CD8-positive, alpha-beta T cell (primary cell): ENCODE measurements at regions of chr12 and their contacts with region 1.

Region 1: DNA sequence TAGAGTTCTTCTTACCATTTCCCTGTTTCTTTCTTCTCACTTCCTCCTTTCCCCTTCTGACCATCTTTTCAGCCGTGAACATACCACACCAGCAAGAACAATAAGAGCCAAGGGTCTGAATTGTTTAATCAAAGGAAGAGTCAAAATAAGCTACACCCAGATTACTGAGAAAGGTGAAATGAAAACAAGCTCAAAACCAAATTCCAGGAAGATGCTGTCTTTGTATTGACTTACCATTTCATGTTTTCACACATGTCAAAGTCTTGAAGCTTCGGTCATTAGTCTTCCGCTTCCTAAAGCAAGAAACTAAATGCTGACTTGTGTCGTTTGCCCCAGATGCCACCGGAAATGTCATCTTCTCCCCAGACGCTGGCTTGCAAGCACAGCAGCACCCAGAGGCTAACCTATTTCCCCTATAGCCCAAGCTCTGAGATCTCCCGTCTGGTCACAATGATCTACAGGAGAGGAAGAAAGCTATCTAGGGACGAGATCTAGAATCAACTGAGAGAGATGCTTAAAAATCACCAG is 136.5 kb upstream of the AMIGO2 start:
- DNase-seq: peak; percentile 28 to 92 (median 73)
- ATAC-seq: peak; percentile 46
- H3K4me3 ChIP-seq: peak overlapping the region; percentile 75 to 80
- H3K4me3 Mint-ChIP-seq: peak overlapping the region; percentile 95
- H3K27ac ChIP-seq: peak overlapping the region; percentile 74 to 81
- H3K27ac Mint-ChIP-seq: peak overlapping the region; percentile 96
- H3K4me1 ChIP-seq: peaks cover 5% of the 10 kb centered on the region
- H3K4me1 Mint-ChIP-seq: peaks cover 30% of the 10 kb centered on the region
- H3K27me3 ChIP-seq: no peaks in the 10 kb centered on the region
- H3K27me3 Mint-ChIP-seq: no peaks in the 10 kb centered on the region
- CTCF ChIP-seq: no peak

Region 2: GRCh38 chr12:45728630-45729232 is 1487.5 kb before region 1 on chr12:
- CTCF ChIA-PET with region 1: no interaction called
- POLR2A ChIA-PET with region 1: interaction called, 3 read pairs
- intact Hi-C with region 1: loop called in 1 of 2 experiments (anchors 5 kb)
- DNase-seq: peak; percentile 93 to 98 (median 97)
- ATAC-seq: peak; percentile 76
- H3K4me3 ChIP-seq: peak overlapping the region; percentile 85 to 90
- H3K4me3 Mint-ChIP-seq: peak overlapping the region; percentile 96
- H3K27ac ChIP-seq: peak overlapping the region; percentile 90 to 96
- H3K27ac Mint-ChIP-seq: peak overlapping the region; percentile 97
- H3K4me1 ChIP-seq: peaks cover 20% of the 10 kb centered on the region
- H3K4me1 Mint-ChIP-seq: peaks cover 26% of the 10 kb centered on the region
- H3K27me3 ChIP-seq: no peaks in the 10 kb centered on the region
- H3K27me3 Mint-ChIP-seq: no peaks in the 10 kb centered on the region
- CTCF ChIP-seq: peak; percentile 90

Region 3: GRCh38 chr12:46839964-46840363 is 376.2 kb before region 1 on chr12:
- CTCF ChIA-PET with region 1: no interaction called
- POLR2A ChIA-PET with region 1: no interaction called
- intact Hi-C with region 1: no loop called
- DNase-seq: no peak
- ATAC-seq: no peak
- H3K4me3 ChIP-seq: no peak overlapping the region
- H3K4me3 Mint-ChIP-seq: no peak overlapping the region
- H3K27ac ChIP-seq: no peak overlapping the region
- H3K27ac Mint-ChIP-seq: no peak overlapping the region
- H3K4me1 ChIP-seq: no peaks in the 10 kb centered on the region
- H3K4me1 Mint-ChIP-seq: no peaks in the 10 kb centered on the region
- H3K27me3 ChIP-seq: no peaks in the 10 kb centered on the region
- H3K27me3 Mint-ChIP-seq: peaks cover 22% of the 10 kb centered on the region
- CTCF ChIP-seq: no peak

Region 4: GRCh38 chr12:47079468-47079980 is 136.7 kb before region 1 on chr12 and contains the starts of genes AMIGO2 and PCED1B:
- CTCF ChIA-PET with region 1: interaction called, 5 read pairs
- POLR2A ChIA-PET with region 1: interaction called, 55 read pairs
- intact Hi-C with region 1: loop called (anchors 2 to 5 kb)
- DNase-seq: peak; percentile 13 to 81 (median 69)
- ATAC-seq: peak; percentile 54
- H3K4me3 ChIP-seq: peak within 1 kb of the TSS; percentile 85 to 92
- H3K4me3 Mint-ChIP-seq: peak within 1 kb of the TSS; percentile 98
- H3K27ac ChIP-seq: peak within 1 kb of the TSS; percentile 63 to 85
- H3K27ac Mint-ChIP-seq: peak within 1 kb of the TSS; percentile 96
- H3K4me1 ChIP-seq: peaks cover 55% of the 10 kb centered on the region
- H3K4me1 Mint-ChIP-seq: peaks cover 76% of the 10 kb centered on the region
- H3K27me3 ChIP-seq: no peaks in the 10 kb centered on the region
- H3K27me3 Mint-ChIP-seq: no peaks in the 10 kb centered on the region
- CTCF ChIP-seq: no peak
- total RNA-seq, gene AMIGO2: 12.5 to 13.5 TPM
- total RNA-seq, gene PCED1B: 32.9 to 33.7 TPM

Region 5: GRCh38 chr12:47276621-47277309 is 60.6 kb after region 1 on chr12:
- CTCF ChIA-PET with region 1: interaction called, 5 read pairs
- POLR2A ChIA-PET with region 1: interaction called, 28 read pairs
- intact Hi-C with region 1: loop called in 1 of 2 experiments (anchors 1 kb)
- DNase-seq: peak; percentile 35 to 91 (median 62)
- ATAC-seq: peak; percentile 94
- H3K4me3 ChIP-seq: peak overlapping the region in 1 of 2 experiments; percentile 25
- H3K4me3 Mint-ChIP-seq: peak overlapping the region; percentile 67
- H3K27ac ChIP-seq: peak overlapping the region; percentile 64 to 91
- H3K27ac Mint-ChIP-seq: peak overlapping the region; percentile 97
- H3K4me1 ChIP-seq: peaks cover 67% of the 10 kb centered on the region
- H3K4me1 Mint-ChIP-seq: peaks cover 80% of the 10 kb centered on the region
- H3K27me3 ChIP-seq: no peaks in the 10 kb centered on the region
- H3K27me3 Mint-ChIP-seq: no peaks in the 10 kb centered on the region
- CTCF ChIP-seq: no peak

Region 6: GRCh38 chr12:47293406-47293805 is 77.2 kb after region 1 on chr12:
- CTCF ChIA-PET with region 1: no interaction called
- POLR2A ChIA-PET with region 1: no interaction called
- intact Hi-C with region 1: no loop called
- DNase-seq: no peak
- ATAC-seq: no peak
- H3K4me3 ChIP-seq: no peak overlapping the region
- H3K4me3 Mint-ChIP-seq: no peak overlapping the region
- H3K27ac ChIP-seq: no peak overlapping the region
- H3K27ac Mint-ChIP-seq: no peak overlapping the region
- H3K4me1 ChIP-seq: peaks cover 16% of the 10 kb centered on the region
- H3K4me1 Mint-ChIP-seq: peaks cover 28% of the 10 kb centered on the region
- H3K27me3 ChIP-seq: no peaks in the 10 kb centered on the region
- H3K27me3 Mint-ChIP-seq: no peaks in the 10 kb centered on the region
- CTCF ChIP-seq: no peak

Region 7: DNA sequence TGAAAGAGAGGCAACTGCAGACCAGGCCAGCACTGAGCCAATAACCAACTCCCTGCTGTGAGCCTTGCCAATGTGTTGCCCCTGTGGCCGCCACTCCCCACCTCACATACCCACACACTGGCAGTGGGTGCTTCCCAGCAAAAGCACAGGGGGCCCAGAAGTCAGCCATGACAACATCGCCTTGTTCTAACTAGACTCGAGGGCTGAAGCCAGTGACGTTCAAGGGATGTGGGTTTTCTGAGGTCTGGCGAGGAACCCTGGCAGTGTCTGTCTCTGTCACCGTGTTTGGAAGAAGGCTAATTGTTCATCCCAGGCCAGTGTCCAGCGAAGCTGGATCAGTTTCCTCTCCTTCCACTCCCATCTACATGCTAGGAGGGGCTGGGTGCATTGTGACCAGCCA is 175.4 kb after region 1 on chr12:
- CTCF ChIA-PET with region 1: interaction called, 15 read pairs
- POLR2A ChIA-PET with region 1: interaction called, 47 read pairs
- intact Hi-C with region 1: loop called (anchors 2 to 5 kb)
- DNase-seq: peak; percentile 37 to 93 (median 69)
- ATAC-seq: peak; percentile 85
- H3K4me3 ChIP-seq: no peak overlapping the region
- H3K4me3 Mint-ChIP-seq: peak overlapping the region; percentile 46
- H3K27ac ChIP-seq: peak overlapping the region; percentile 74 to 76
- H3K27ac Mint-ChIP-seq: peak overlapping the region; percentile 100
- H3K4me1 ChIP-seq: peaks cover 58% of the 10 kb centered on the region
- H3K4me1 Mint-ChIP-seq: peaks cover 78% of the 10 kb centered on the region
- H3K27me3 ChIP-seq: no peaks in the 10 kb centered on the region
- H3K27me3 Mint-ChIP-seq: no peaks in the 10 kb centered on the region
- CTCF ChIP-seq: no peak

Region 8: DNA sequence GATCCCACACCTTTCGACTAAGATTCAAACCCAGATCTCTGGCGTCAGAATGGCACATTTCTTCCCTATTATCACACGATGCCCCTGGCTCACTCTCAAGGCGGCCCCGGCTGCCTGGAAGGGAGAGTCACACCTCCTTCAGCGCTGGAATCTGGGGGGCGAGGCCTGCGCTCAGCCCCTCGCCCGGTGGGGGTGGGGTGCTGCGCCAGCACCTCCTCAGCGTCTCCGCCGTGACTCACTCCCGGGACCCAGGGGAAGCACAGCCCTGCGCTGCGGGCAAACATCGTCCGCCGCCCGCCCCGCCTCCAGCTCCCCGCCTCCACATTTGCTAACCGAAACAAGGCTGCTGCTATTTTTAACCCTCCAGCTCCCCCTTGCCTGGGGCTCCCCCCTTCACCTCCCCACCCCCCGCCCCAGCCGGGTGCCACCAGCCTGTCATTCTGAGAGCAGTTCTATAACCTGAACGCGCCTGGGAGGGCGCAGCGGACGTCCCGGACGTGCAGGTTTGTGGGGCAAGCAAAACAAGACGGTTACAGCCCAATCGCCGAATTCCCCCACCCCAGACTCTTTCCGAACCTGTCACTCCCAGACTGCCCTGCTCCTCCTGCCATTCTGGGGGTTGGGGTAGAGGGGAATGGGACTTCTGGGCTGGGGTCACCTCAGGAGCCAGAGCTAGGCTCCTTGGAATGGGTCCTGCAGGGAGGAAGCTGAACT is 596.7 kb after region 1 on chr12:
- CTCF ChIA-PET with region 1: no interaction called
- POLR2A ChIA-PET with region 1: no interaction called
- intact Hi-C with region 1: loop called in 1 of 2 experiments (anchors 10 kb)
- DNase-seq: peak; percentile 77 to 95 (median 92)
- ATAC-seq: peak; percentile 73
- H3K4me3 ChIP-seq: peak overlapping the region; percentile 44 to 59
- H3K4me3 Mint-ChIP-seq: peak overlapping the region; percentile 82
- H3K27ac ChIP-seq: peak overlapping the region; percentile 65 to 73
- H3K27ac Mint-ChIP-seq: peak overlapping the region; percentile 97
- H3K4me1 ChIP-seq: peaks cover 95% of the 10 kb centered on the region
- H3K4me1 Mint-ChIP-seq: peaks cover 93% of the 10 kb centered on the region
- H3K27me3 ChIP-seq: no peaks in the 10 kb centered on the region
- H3K27me3 Mint-ChIP-seq: no peaks in the 10 kb centered on the region
- CTCF ChIP-seq: no peak